CD8-positive, alpha-beta T cell (primary cell): ENCODE measurements at regions of chr17 and their contacts with region 1.

Region 1: GRCh38 chr17:39687811-39688518 is at the start of gene PGAP3:
- DNase-seq: peak; percentile 54 to 92 (median 85)
- ATAC-seq: peak; percentile 93
- H3K4me3 ChIP-seq: peak within 1 kb of the TSS; percentile 68 to 85
- H3K4me3 Mint-ChIP-seq: peak within 1 kb of the TSS; percentile 97
- H3K27ac ChIP-seq: peak within 1 kb of the TSS; percentile 80 to 86
- H3K27ac Mint-ChIP-seq: peak within 1 kb of the TSS; percentile 98
- H3K4me1 ChIP-seq: peaks cover 17% of the 10 kb centered on the region
- H3K4me1 Mint-ChIP-seq: peaks cover 27% of the 10 kb centered on the region
- H3K27me3 ChIP-seq: peaks cover 0 to 2% of the 10 kb centered on the region in 2 experiments
- H3K27me3 Mint-ChIP-seq: no peaks in the 10 kb centered on the region
- CTCF ChIP-seq: no peak
- total RNA-seq, gene PGAP3: 20.9 to 22.6 TPM

Region 2: GRCh38 chr17:39069114-39069756 is 618.7 kb before region 1 on chr17:
- CTCF ChIA-PET with region 1: no interaction called
- POLR2A ChIA-PET with region 1: no interaction called
- intact Hi-C with region 1: no loop called
- DNase-seq: peak in 7 of 9 experiments; percentile 2 to 76 (median 32)
- ATAC-seq: peak; percentile 96
- H3K4me3 ChIP-seq: no peak overlapping the region
- H3K4me3 Mint-ChIP-seq: no peak overlapping the region
- H3K27ac ChIP-seq: no peak overlapping the region
- H3K27ac Mint-ChIP-seq: peak overlapping the region; percentile 57
- H3K4me1 ChIP-seq: no peaks in the 10 kb centered on the region
- H3K4me1 Mint-ChIP-seq: peaks cover 5% of the 10 kb centered on the region
- H3K27me3 ChIP-seq: no peaks in the 10 kb centered on the region
- H3K27me3 Mint-ChIP-seq: no peaks in the 10 kb centered on the region
- CTCF ChIP-seq: peak; percentile 65

Region 3: DNA sequence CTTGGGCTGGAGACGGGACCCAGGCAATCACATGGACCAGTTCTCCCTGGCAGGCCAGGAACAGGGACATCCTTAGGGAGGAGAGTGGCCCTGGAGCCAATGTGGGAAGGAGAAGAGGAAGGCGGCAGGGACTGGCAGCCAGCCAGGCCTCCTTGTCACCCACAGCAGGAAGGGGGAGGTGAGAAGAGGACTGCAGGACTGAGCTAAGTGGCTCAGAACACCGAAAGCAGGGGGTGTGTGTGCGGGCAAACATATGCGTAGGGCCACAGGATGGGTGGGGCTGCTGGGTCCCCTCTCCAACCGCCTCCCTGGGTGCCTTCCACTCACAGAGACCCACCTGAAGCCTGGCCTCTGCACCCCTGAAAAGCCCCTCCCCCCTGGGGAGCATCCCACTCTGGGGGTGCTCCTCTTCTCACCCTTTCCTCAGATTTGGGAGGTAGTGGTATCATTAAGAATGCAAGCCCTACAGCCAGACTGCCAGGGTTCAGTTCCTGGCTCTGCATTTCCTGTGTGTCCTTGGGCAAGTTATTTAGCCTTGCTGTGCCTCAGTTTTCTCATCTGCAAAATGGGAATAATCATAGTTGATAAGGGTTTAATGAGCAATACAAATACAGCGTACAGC is 11.7 kb before region 1 on chr17:
- CTCF ChIA-PET with region 1: interaction called, 13 read pairs
- POLR2A ChIA-PET with region 1: interaction called, 13 read pairs
- intact Hi-C with region 1: no loop called
- DNase-seq: peak; percentile 24 to 89 (median 61)
- ATAC-seq: peak; percentile 83
- H3K4me3 ChIP-seq: no peak overlapping the region
- H3K4me3 Mint-ChIP-seq: peak overlapping the region; percentile 38
- H3K27ac ChIP-seq: peak overlapping the region; percentile 48 to 88
- H3K27ac Mint-ChIP-seq: peak overlapping the region; percentile 81
- H3K4me1 ChIP-seq: peaks cover 69% of the 10 kb centered on the region
- H3K4me1 Mint-ChIP-seq: peaks cover 69% of the 10 kb centered on the region
- H3K27me3 ChIP-seq: no peaks in the 10 kb centered on the region
- H3K27me3 Mint-ChIP-seq: no peaks in the 10 kb centered on the region
- CTCF ChIP-seq: no peak

Region 4: DNA sequence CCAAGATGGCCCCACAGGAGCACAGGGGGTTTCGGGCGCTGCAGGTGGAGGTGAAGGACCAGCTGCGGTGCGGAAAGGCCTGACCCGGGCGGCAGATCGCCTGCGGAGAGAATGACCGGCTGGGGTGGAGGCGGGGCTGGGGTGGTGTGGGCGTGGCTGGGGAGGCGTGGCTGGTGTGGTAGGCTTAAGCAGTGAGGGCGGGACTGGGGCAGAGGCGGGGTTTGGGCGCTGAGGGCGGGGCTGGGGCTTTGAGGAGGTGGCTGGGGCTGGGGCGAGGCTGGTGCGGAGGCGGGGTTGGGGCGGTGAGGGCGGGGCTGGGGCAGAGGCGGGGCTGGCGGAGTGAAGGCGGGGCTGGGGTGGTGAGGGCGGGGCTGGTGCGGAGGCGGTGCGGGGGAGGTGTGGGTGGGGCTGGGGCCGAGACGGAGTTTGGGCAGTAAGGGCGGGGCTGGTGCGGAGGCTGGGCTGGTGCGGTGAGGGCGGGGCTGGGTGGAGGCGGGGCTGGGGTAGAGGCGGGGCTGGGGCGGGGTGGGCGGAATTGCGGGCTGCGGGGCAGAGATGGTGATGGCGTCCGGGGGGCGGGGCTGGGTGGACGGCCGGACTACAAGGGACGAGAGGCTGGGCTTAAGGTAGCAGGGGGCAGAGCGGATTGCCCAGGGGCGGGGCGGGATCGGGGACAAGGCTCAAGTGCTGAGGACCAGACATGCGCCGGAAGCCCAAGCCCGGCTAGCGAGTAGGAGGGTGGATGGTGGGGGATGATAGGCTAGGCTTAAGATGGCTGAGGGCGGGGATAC is 264.9 kb after region 1 on chr17:
- CTCF ChIA-PET with region 1: no interaction called
- POLR2A ChIA-PET with region 1: no interaction called
- intact Hi-C with region 1: loop called in 1 of 2 experiments (anchors 5 kb)
- DNase-seq: peak; percentile 92 to 97 (median 95)
- ATAC-seq: peak; percentile 87
- H3K4me3 ChIP-seq: peak overlapping the region; percentile 66 to 80
- H3K4me3 Mint-ChIP-seq: peak overlapping the region; percentile 86
- H3K27ac ChIP-seq: peak overlapping the region; percentile 51 to 74
- H3K27ac Mint-ChIP-seq: peak overlapping the region; percentile 89
- H3K4me1 ChIP-seq: peaks cover 26% of the 10 kb centered on the region
- H3K4me1 Mint-ChIP-seq: peaks cover 22% of the 10 kb centered on the region
- H3K27me3 ChIP-seq: no peaks in the 10 kb centered on the region
- H3K27me3 Mint-ChIP-seq: no peaks in the 10 kb centered on the region
- CTCF ChIP-seq: no peak